ENCODE measurements at regions of chr20 and their contacts with region 1.

Region 1: GRCh38 chr20:62508603-62509051 is 32.8 kb upstream of the GATA5 start:
- DNase-seq: no peak
- ATAC-seq: peak in 2 of 4 donors; percentile 46 to 58
- H3K4me3 ChIP-seq: no peak overlapping the region
- H3K27ac ChIP-seq: no peak overlapping the region
- H3K4me1 ChIP-seq: no peaks in the 10 kb centered on the region
- H3K27me3 ChIP-seq: no peaks in the 10 kb centered on the region
- CTCF ChIP-seq: no peak

Region 2: DNA sequence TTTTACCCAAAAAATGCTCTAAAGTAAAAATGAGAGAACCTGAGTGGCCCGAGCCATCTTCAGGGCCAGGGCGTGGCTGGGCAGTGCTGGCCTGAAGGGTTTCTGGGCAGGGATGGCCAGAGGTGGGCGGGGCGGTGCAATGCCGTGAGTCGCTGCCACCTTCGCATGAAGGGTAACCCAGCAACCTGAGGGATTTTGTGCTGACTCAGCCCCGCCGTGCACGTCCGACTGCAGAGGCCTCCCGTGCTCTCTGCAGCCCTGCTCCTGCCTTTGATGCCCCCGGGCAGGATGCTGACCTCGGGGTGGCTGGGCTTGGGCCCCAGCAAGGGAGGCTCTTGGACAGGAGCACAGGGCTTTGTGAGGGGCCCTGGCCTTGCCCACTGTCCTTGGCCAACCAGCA is 48.8 kb after region 1 on chr20:
- intact Hi-C with region 1: loop called in 1 of 3 experiments (anchors 5 kb)
- DNase-seq: peak in 1 of 6 donors; percentile 22
- ATAC-seq: peak in 3 of 4 donors; percentile 16 to 82 (median 60)
- H3K4me3 ChIP-seq: no peak overlapping the region
- H3K27ac ChIP-seq: no peak overlapping the region
- H3K4me1 ChIP-seq: no peaks in the 10 kb centered on the region
- H3K27me3 ChIP-seq: peaks cover 0 to 22% (median 4%) of the 10 kb centered on the region in 4 donors
- CTCF ChIP-seq: no peak

Measured in pancreas (tissue), 10 donors.